ENCODE measurements at regions of chr7 and their contacts with region 1.

Region 1: GRCh38 chr7:21911341-21911875 is 34.3 kb downstream of the CDCA7L start:
- DNase-seq: peak; percentile 83
- H3K4me3 ChIP-seq: no peak overlapping the region
- CTCF ChIP-seq: no peak

Region 2: GRCh38 chr7:21596801-21597200 is 314.6 kb before region 1 on chr7:
- CTCF ChIA-PET with region 1: no interaction called
- POLR2A ChIA-PET with region 1: no interaction called
- DNase-seq: no peak
- H3K4me3 ChIP-seq: no peak overlapping the region
- CTCF ChIP-seq: no peak

Region 3: DNA sequence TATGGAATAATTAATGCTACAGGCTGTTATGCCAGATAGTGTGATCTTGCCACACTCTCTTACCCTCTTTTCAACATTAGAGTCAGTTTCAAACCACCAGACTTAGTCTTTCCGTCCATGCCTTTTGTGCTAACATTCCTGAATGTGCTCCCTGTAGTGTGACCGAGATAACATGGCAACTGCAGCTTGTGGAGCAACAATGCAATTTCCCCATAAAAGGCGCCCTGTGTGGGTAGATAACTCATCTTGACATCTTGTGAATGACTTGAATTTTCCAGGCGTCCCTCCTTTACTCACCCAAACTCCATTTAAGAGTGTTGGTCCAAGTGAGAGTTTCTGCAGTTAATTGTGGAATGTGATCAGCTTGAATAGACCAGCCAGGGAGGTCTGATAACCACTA is 269.0 kb before region 1 on chr7:
- CTCF ChIA-PET with region 1: no interaction called
- POLR2A ChIA-PET with region 1: no interaction called
- DNase-seq: no peak
- H3K4me3 ChIP-seq: no peak overlapping the region
- CTCF ChIP-seq: no peak

Region 4: DNA sequence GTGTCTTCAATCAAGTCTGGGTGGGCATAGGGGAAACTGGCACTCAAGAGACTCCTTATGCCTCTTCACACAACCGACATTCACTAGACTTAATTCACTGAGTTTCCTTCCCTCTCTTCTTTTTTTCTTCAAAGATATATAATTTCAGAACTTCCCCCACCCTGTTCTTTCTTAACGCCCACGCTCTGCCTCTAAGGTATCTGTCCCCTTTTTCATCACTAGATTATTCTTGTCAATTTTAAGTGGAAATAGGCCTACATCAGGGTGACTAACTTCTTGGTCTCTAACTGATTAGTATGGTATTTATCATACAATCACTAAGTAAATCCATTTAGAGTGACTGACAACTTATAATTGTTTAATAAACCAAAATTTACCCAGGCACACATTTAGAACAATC is 92.4 kb before region 1 on chr7:
- CTCF ChIA-PET with region 1: no interaction called
- POLR2A ChIA-PET with region 1: no interaction called
- DNase-seq: no peak
- H3K4me3 ChIP-seq: no peak overlapping the region
- CTCF ChIP-seq: no peak

Region 5: DNA sequence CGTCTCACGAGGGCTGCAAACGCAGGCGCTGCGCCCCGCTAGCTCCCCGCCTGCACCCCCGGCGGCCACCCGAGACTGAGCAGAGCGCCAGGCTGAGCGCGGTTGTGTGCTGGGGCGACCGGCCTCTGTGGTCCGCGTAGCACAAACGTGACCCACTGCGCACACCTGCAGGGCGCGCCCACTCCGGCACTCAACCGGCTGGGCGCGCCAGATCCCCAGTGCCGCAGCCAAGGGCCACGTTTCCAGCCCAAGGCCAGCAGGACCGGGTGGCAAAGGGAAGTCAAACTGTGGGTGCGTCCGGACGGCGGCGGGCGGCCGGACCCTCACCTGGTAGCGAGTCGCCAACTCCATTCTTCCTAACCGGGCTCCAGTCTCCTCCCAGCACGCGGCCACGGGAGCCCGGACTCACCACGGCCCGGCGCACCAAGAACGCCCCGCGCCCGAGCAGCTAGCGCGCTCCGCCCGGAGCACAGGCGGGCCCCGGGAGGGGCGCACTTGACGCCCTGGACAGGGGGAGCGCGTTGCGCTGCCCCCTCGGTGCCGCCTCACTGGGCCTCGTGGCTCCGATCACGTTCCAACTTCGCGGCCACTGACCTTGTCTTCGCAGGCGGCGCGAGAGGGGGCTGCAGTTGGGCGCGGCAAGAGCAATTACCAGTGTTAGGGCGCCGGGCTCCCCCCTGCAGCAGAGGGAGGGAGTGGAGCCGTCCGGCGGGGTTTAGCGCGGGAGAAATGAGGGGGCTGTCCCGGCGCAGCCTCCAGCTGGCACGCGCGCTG is 34.2 kb after region 1 on chr7 and contains the start of gene CDCA7L:
- CTCF ChIA-PET with region 1: interaction called, 3 read pairs
- POLR2A ChIA-PET with region 1: interaction called, 15 read pairs
- DNase-seq: no peak
- H3K4me3 ChIP-seq: peak within 1 kb of the TSS; percentile 79
- CTCF ChIP-seq: peak; percentile 8